PC-9 (cell line): ENCODE measurements at regions of chr14 and their contacts with region 1.

Region 1: DNA sequence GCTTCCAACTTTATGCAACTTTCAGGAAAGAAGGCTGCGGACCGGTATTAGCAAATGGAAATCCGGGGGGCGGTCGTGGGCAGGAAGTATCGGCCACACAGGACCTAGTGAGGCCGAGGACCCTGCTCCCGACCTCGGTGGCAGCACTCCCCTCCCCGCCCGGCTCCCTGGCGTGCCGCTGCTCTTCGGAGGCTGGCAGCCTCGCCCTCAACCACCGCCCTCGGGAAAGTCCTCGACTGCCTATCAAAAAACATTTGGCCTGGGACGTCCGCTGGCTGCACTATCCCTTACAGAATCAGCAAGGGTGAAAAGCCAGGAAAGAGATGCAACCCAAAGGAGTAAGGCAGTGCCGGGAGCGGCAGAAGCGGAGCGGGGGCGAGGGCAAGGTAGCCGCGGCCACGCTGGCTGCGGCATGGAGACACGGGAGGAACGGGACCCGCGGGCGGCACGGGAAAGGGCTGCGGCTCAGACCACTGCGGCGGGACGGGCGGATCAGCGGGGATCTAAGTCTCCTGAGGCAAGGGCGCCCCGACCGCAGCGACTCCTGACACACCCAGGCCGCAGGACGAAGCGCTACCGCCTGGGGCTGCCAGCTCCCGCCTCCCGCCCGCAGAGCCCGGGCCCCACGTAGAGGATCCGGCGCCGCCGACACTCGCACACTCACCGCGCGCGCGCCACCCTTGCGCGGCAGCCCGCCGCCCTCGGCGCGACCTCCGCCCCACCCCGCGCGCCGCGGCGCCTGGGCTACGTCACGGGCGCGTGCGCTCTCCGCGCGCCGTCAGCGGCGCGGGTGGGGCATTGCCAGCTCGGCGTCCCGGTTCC is at the starts of genes BBOF1 and ENTPD5:
- DNase-seq: peak; percentile 57 to 87
- H3K4me3 ChIP-seq: peak within 1 kb of the TSS; percentile 79
- H3K27ac ChIP-seq: peak within 1 kb of the TSS; percentile 81
- H3K4me1 ChIP-seq: peaks cover 8% of the 10 kb centered on the region
- H3K27me3 ChIP-seq: no peaks in the 10 kb centered on the region
- CTCF ChIP-seq: no peak
- total RNA-seq, gene BBOF1: 5.5 and 6.8 TPM in 2 replicates
- total RNA-seq, gene ENTPD5: 12.3 and 12.6 TPM in 2 replicates

Region 2: GRCh38 chr14:73825551-73826188 is 193.1 kb before region 1 on chr14:
- CTCF ChIA-PET with region 1: no interaction called
- POLR2A ChIA-PET with region 1: no interaction called
- intact Hi-C with region 1: no loop called
- DNase-seq: peak; percentile 68 to 86
- H3K4me3 ChIP-seq: no peak overlapping the region
- H3K27ac ChIP-seq: no peak overlapping the region
- H3K4me1 ChIP-seq: peaks cover 33% of the 10 kb centered on the region
- H3K27me3 ChIP-seq: no peaks in the 10 kb centered on the region
- CTCF ChIP-seq: peak; percentile 85

Region 3: GRCh38 chr14:73949744-73950734 is 68.8 kb before region 1 on chr14 and contains the starts of genes COQ6 and FAM161B:
- CTCF ChIA-PET with region 1: no interaction called
- POLR2A ChIA-PET with region 1: no interaction called
- intact Hi-C with region 1: loop called (anchors 2 kb)
- DNase-seq: peak; percentile 95 to 96
- H3K4me3 ChIP-seq: peak within 1 kb of the TSS; percentile 83
- H3K27ac ChIP-seq: peak within 1 kb of the TSS; percentile 69
- H3K4me1 ChIP-seq: peaks cover 6% of the 10 kb centered on the region; the same call in 1 of the 2 replicates
- H3K27me3 ChIP-seq: no peaks in the 10 kb centered on the region
- CTCF ChIP-seq: no peak
- total RNA-seq, gene COQ6: 25.4 and 25.7 TPM in 2 replicates
- total RNA-seq, gene FAM161B: 1.6 TPM in 2 replicates